Activated T-helper 2 cell treated with anti-CD3 and anti-CD28 coated beads, Interferon-gamma antibody, Interleukin-2, Interleukin-4, amounts not matched to agents 10 μg/mL and 5 μg/mL and 100 μg/mL, durations not matched to agents 14 hours and 24 hours and 36 hours (primary cell): ENCODE measurements at regions of chr9 and their contacts with region 1.

Region 1: GRCh38 chr9:19122490-19123042 is 4.7 kb downstream of the PLIN2 start:
- DNase-seq: no peak
- H3K4me3 Mint-ChIP-seq: no peak overlapping the region
- H3K27ac Mint-ChIP-seq: peak overlapping the region; percentile 49
- H3K4me1 Mint-ChIP-seq: peaks cover 45% of the 10 kb centered on the region
- H3K27me3 Mint-ChIP-seq: no peaks in the 10 kb centered on the region

Region 2: DNA sequence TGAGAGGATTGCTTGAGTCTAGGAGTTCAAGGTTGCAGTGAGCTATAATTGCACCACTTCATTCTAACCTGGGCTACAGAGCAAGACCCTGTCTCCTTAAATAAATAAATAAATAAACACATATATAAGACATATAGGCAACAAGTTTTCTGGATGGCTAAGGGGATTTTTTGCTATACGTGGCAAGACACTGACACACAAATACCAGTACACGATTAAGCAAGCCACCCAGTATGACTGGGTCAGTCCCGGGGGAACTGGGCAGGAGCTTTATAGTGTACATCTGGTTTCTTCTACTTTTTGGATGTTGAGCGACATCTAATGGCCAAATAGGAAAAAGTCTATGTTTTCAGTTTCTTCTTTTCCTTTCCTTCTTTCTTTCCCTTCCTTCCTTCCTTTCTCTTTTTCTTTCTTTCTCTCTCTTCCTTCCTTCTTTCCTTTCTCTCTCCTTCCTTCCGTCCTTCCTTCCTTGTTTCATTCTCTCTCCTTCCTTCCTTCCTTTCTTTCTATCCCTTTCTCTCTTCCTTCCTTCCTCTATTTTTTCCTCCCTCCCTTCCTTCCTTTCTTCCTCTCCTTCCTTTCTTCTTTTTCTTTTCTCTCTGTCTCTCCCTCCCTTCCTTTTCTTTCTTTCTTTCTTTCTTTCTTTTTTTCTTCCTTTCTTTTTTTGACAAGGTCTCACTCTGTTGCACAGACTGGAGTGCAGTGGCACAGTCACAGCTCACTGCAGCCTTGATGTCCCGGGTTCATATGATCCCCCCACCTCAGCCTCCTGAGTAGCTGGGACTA is 51.8 kb after region 1 on chr9:
- intact Hi-C with region 1: loop called (anchors 1 kb)
- DNase-seq: peak; percentile 21
- H3K4me3 Mint-ChIP-seq: peak overlapping the region; percentile 9
- H3K27ac Mint-ChIP-seq: peak overlapping the region; percentile 46
- H3K4me1 Mint-ChIP-seq: peaks cover 29% of the 10 kb centered on the region
- H3K27me3 Mint-ChIP-seq: no peaks in the 10 kb centered on the region